AG04449 (cell line): ENCODE measurements at regions of chr15 and their contacts with region 1.

Region 1: GRCh38 chr15:50003786-50004334 is 115.2 kb downstream of the ATP8B4 start:
- DNase-seq: peak; percentile 29
- H3K4me3 ChIP-seq: no peak overlapping the region
- CTCF ChIP-seq: peak; percentile 88

Region 2: DNA sequence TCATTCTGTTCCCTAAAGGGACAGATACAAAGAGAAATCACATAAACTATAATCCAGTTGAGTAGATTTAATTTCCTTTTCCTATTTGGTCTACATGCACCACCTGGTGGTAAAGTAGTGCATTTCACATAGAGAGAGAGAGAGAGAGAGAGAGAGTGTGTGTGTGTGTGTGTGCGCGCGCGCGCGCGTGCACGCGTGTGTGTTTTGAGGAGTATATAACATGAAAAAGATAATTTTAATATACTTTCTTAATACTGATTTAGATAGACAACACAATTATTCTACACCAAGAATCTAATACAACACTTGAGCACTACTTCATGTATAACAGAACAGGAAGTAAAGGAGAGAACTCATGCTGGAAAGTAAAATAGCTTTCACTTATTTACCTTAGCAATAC is 581.9 kb before region 1 on chr15:
- CTCF ChIA-PET with region 1: interaction called, 17 read pairs
- POLR2A ChIA-PET with region 1: no interaction called
- DNase-seq: no peak
- H3K4me3 ChIP-seq: no peak overlapping the region
- CTCF ChIP-seq: peak; percentile 45

Region 3: DNA sequence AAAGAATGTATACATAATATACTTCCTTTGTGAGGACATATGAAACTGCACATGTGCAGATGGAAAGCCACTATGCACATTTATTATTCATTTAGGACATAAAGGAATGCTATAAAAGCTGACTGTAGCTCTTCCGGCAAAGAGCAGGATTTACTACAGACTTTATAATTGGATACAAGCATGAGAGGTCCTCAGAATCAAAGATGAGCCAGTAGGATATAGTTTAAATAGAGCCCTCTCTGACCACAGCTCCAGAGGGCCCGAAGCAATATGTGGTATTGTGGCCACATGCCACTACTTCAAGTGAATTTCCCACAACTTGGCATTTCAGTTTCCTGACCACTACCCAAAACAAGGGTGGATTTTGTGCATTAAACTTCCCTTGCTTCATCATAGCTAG is 25.7 kb before region 1 on chr15:
- CTCF ChIA-PET with region 1: interaction called, 17 read pairs
- POLR2A ChIA-PET with region 1: no interaction called
- DNase-seq: no peak
- H3K4me3 ChIP-seq: no peak overlapping the region
- CTCF ChIP-seq: no peak

Region 4: DNA sequence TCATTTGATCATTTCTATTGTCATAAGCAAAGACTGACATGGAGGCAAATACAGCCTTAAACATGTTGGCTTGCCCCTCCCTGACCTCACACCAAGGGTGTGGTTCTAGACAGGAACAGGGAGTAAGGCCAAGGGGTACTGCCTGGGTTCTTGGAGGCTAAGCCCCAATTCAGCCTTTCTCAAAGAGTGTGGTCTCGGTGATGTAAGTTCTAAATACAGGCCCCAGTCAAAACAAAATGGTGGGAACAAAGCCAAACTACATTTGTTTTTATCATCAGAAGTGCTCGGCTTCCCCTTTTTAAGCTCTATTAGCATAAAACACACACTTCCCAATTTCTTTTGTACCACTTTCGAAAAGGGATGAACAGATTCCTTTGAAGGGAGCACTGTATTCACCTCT is 14.4 kb before region 1 on chr15:
- CTCF ChIA-PET with region 1: interaction called, 22 read pairs
- POLR2A ChIA-PET with region 1: no interaction called
- DNase-seq: no peak
- H3K4me3 ChIP-seq: no peak overlapping the region
- CTCF ChIP-seq: no peak

Region 5: DNA sequence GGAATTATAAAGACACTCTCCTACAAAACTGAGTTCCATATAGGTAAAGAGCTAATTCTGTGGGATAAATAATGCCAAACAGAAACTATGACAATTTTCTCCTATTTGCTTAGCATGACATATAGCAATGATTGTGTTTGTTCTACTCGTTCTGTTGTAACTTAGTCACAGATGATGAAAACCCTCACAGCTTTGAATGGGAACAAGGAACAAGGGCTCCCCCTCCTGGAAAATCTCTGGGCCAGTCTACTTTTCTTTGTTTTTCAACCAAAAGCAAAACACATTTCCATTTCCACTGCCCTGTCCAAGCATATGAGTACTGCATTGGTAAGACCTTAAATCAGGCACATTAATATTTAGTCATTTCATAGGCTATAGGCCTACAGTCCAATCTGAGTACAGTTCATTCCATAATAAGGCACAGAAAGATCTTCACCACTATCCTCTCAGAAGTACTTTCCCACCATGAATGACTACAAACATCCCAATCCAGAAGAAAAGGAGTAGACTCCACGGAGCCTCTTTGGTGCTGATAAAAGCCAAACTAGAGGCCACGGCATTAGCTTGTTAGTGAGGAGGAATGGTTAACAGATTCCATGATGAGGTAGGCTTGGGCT is 48.1 kb after region 1 on chr15:
- CTCF ChIA-PET with region 1: interaction called, 15 read pairs
- POLR2A ChIA-PET with region 1: no interaction called
- DNase-seq: peak; percentile 52
- H3K4me3 ChIP-seq: no peak overlapping the region
- CTCF ChIP-seq: peak; percentile 69